ENCODE measurements at regions of chr18 and their contacts with region 1.

Region 1: GRCh38 chr18:3454365-3455089 is 4.6 kb downstream of the TGIF1 start:
- DNase-seq: peak in 6 of 9 experiments; percentile 23 to 79 (median 37)
- ATAC-seq: no peak
- H3K4me3 ChIP-seq: peak overlapping the region; percentile 30 to 42
- H3K4me3 Mint-ChIP-seq: peak overlapping the region; percentile 92
- H3K27ac ChIP-seq: peak overlapping the region; percentile 38 to 100
- H3K27ac Mint-ChIP-seq: peak overlapping the region; percentile 100
- H3K4me1 ChIP-seq: peaks cover 21% of the 10 kb centered on the region
- H3K4me1 Mint-ChIP-seq: peaks cover 61% of the 10 kb centered on the region
- H3K27me3 ChIP-seq: no peaks in the 10 kb centered on the region
- H3K27me3 Mint-ChIP-seq: no peaks in the 10 kb centered on the region
- CTCF ChIP-seq: peak; percentile 87

Region 2: DNA sequence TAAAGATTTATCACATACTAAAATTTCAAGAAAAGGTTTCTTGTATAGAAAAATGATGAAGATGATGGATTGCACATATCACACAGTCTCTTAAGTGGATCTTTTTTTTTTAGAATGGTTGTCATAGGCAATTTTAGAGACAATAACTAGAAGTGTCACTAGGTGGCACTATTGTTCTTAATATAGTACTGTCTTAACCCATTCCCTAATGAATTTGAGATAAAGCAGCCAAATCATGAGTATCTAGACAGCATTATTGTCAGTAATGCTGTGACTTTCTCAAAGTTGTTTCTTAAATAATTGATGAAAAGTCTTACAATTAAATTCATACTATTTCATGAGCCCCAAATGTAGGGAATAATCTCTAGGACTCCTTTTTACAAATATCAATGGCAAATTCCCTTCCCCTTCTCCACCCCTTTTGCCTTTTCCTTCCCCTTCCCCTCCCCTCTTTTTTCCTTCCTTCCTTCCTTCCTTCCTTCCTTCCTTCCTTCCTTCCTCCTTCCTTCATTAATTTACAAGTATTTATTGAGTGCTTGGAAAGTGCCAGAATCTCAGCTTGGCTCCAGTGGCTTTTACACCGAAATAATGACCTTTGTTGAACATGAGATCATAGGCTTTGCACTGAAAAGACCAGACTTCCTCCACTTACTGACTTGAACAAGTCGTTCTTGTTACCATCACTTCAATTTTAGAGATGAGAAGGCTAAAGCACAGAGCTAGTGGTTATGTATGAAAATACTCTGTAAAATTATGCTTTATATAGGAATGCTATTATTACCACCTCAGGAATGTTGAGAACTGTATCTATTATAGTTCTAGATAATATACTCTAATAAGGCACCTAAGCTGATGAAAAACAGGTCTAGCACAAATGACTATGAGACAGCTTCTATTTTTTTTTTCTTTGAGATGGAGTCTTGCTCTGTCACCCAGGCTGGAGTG is 172.8 kb before region 1 on chr18:
- CTCF ChIA-PET with region 1: interaction called, 53 read pairs
- POLR2A ChIA-PET with region 1: no interaction called
- intact Hi-C with region 1: loop called (anchors 1 kb)
- DNase-seq: peak in 2 of 9 experiments; percentile 77 to 84
- ATAC-seq: peak; percentile 93
- H3K4me3 ChIP-seq: no peak overlapping the region
- H3K4me3 Mint-ChIP-seq: no peak overlapping the region
- H3K27ac ChIP-seq: no peak overlapping the region
- H3K27ac Mint-ChIP-seq: no peak overlapping the region
- H3K4me1 ChIP-seq: no peaks in the 10 kb centered on the region
- H3K4me1 Mint-ChIP-seq: peaks cover 4% of the 10 kb centered on the region
- H3K27me3 ChIP-seq: no peaks in the 10 kb centered on the region
- H3K27me3 Mint-ChIP-seq: no peaks in the 10 kb centered on the region
- CTCF ChIP-seq: peak; percentile 75

Region 3: GRCh38 chr18:3323900-3324299 is 130.6 kb before region 1 on chr18:
- CTCF ChIA-PET with region 1: interaction called, 8 read pairs
- POLR2A ChIA-PET with region 1: interaction called, 3 read pairs
- intact Hi-C with region 1: loop called in 1 of 2 experiments (anchors 1 kb)
- DNase-seq: no peak
- ATAC-seq: no peak
- H3K4me3 ChIP-seq: no peak overlapping the region
- H3K4me3 Mint-ChIP-seq: no peak overlapping the region
- H3K27ac ChIP-seq: no peak overlapping the region
- H3K27ac Mint-ChIP-seq: no peak overlapping the region
- H3K4me1 ChIP-seq: no peaks in the 10 kb centered on the region
- H3K4me1 Mint-ChIP-seq: no peaks in the 10 kb centered on the region
- H3K27me3 ChIP-seq: no peaks in the 10 kb centered on the region
- H3K27me3 Mint-ChIP-seq: peaks cover 13% of the 10 kb centered on the region
- CTCF ChIP-seq: no peak

Region 4: GRCh38 chr18:3441290-3441689 is 13.2 kb before region 1 on chr18:
- CTCF ChIA-PET with region 1: interaction called, 25 read pairs
- POLR2A ChIA-PET with region 1: interaction called, 3 read pairs
- intact Hi-C with region 1: loop called (anchors 1 kb)
- DNase-seq: peak in 3 of 9 experiments; percentile 16 to 67 (median 56)
- ATAC-seq: peak; percentile 67
- H3K4me3 ChIP-seq: no peak overlapping the region
- H3K4me3 Mint-ChIP-seq: no peak overlapping the region
- H3K27ac ChIP-seq: no peak overlapping the region
- H3K27ac Mint-ChIP-seq: no peak overlapping the region
- H3K4me1 ChIP-seq: no peaks in the 10 kb centered on the region
- H3K4me1 Mint-ChIP-seq: peaks cover 5% of the 10 kb centered on the region
- H3K27me3 ChIP-seq: no peaks in the 10 kb centered on the region
- H3K27me3 Mint-ChIP-seq: no peaks in the 10 kb centered on the region
- CTCF ChIP-seq: peak; percentile 20

Region 5: GRCh38 chr18:3478262-3478978 is 23.9 kb after region 1 on chr18:
- CTCF ChIA-PET with region 1: interaction called, 11 read pairs
- POLR2A ChIA-PET with region 1: interaction called, 3 read pairs
- intact Hi-C with region 1: no loop called
- DNase-seq: no peak
- ATAC-seq: no peak
- H3K4me3 ChIP-seq: no peak overlapping the region
- H3K4me3 Mint-ChIP-seq: no peak overlapping the region
- H3K27ac ChIP-seq: no peak overlapping the region
- H3K27ac Mint-ChIP-seq: no peak overlapping the region
- H3K4me1 ChIP-seq: no peaks in the 10 kb centered on the region
- H3K4me1 Mint-ChIP-seq: no peaks in the 10 kb centered on the region
- H3K27me3 ChIP-seq: no peaks in the 10 kb centered on the region
- H3K27me3 Mint-ChIP-seq: no peaks in the 10 kb centered on the region
- CTCF ChIP-seq: no peak

Region 6: GRCh38 chr18:3634250-3634939 is 179.9 kb after region 1 on chr18:
- CTCF ChIA-PET with region 1: no interaction called
- POLR2A ChIA-PET with region 1: no interaction called
- intact Hi-C with region 1: no loop called
- DNase-seq: no peak
- ATAC-seq: no peak
- H3K4me3 ChIP-seq: no peak overlapping the region
- H3K4me3 Mint-ChIP-seq: no peak overlapping the region
- H3K27ac ChIP-seq: no peak overlapping the region
- H3K27ac Mint-ChIP-seq: no peak overlapping the region
- H3K4me1 ChIP-seq: no peaks in the 10 kb centered on the region
- H3K4me1 Mint-ChIP-seq: no peaks in the 10 kb centered on the region
- H3K27me3 ChIP-seq: no peaks in the 10 kb centered on the region
- H3K27me3 Mint-ChIP-seq: no peaks in the 10 kb centered on the region
- CTCF ChIP-seq: no peak

Region 7: DNA sequence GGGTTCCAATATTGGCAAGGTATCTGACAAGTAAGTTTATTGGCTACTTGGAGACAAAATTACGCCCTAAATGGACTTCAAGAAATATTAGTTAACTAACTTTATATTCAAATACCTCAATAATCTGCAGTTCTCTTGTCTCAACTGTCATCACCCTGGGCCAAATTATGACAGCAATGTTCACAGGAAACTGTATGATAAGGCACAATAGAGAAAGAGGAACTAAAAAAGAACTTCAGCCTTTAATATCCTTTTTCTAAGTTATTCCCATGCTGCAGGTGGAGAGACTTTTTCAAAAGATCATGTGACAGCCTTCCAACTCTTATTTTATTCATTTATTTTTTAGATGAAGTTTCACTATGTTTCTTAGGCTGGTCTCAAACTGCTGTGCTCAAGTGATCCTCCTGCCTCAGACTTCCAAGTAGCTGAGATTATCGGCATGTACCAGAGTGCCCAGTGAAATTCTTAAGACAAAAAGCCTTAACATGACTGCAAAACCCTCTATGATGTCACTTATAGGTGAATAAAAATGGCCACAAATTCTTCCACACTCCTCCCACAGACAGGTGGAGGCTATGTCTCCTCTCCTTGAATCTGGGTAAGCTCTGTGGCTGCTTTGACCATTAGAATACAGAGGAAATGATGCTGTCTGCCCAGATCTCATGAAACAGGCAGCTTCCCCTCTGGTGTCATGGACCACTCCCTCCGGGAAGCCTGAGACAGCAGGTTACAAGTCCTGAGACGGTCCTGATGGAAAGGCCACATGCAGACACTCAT is 206.4 kb after region 1 on chr18:
- CTCF ChIA-PET with region 1: interaction called, 64 read pairs
- POLR2A ChIA-PET with region 1: no interaction called
- intact Hi-C with region 1: loop called (anchors 1 to 5 kb)
- DNase-seq: no peak
- ATAC-seq: no peak
- H3K4me3 ChIP-seq: no peak overlapping the region
- H3K4me3 Mint-ChIP-seq: no peak overlapping the region
- H3K27ac ChIP-seq: no peak overlapping the region
- H3K27ac Mint-ChIP-seq: no peak overlapping the region
- H3K4me1 ChIP-seq: no peaks in the 10 kb centered on the region
- H3K4me1 Mint-ChIP-seq: peaks cover 4% of the 10 kb centered on the region
- H3K27me3 ChIP-seq: no peaks in the 10 kb centered on the region
- H3K27me3 Mint-ChIP-seq: peaks cover 2% of the 10 kb centered on the region
- CTCF ChIP-seq: no peak

Measured in CD8-positive, alpha-beta T cell (primary cell).